Caco-2 (cell line): ENCODE measurements at regions of chr19 and their contacts with region 1.

Region 1: DNA sequence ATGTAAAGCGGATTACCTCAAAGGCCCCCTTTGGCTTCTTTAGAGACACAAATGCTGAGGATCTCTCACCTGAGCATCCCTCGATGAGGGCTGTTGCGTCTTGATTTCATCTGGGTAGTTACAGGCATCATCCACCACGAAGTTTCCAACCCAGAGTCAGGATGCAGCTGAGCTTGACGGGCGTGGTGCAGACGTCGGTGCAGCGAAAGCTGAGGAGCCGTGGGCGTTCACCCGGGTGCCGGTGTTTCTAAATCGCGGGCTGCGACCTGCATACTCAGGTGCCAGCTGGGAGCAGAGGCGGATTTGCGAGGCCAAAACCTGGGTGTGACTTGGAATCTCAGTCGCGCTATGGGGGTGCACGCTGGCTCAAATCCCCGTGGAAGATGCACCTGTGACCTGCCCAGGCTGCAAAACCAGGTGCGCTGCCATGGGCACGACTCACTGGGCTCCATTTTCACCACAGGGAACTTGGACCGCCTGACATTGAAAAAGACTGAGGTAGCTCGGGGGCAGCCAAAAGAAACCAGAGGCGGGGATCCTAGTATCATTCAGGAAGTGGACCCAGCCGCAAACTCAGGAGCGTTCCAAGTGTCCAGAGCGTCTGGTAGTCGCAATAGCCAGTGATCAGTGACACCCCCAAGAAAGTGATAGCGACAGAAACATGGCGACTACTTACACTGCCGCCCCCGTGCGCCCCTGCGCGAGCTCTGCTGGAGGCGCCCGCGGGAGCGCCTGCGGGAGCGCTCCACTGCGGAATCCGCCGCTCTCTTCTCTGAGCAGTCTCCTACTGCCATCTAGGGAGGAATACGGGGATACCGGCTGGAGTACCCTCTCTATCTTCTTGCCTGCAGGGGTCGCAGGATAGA is 36.4 kb upstream of the IGFL4 start:
- DNase-seq: peak; percentile 90 to 92
- H3K4me3 ChIP-seq: peak overlapping the region; percentile 53
- H3K4me3 Mint-ChIP-seq: peak overlapping the region; percentile 86
- H3K27ac Mint-ChIP-seq: peak overlapping the region; percentile 57
- H3K4me1 ChIP-seq: peaks cover 5% of the 10 kb centered on the region; the same call in 1 of the 2 replicates
- H3K4me1 Mint-ChIP-seq: peaks cover 22% of the 10 kb centered on the region
- H3K27me3 ChIP-seq: no peaks in the 10 kb centered on the region
- H3K27me3 Mint-ChIP-seq: no peaks in the 10 kb centered on the region
- CTCF ChIP-seq: peak; percentile 98 to 100

Region 2: GRCh38 chr19:46021531-46022041 is 55.6 kb before region 1 on chr19:
- CTCF ChIA-PET with region 1: interaction called, 156 read pairs
- POLR2A ChIA-PET with region 1: no interaction called
- intact Hi-C with region 1: no loop called
- DNase-seq: peak in 1 of 2 experiments; percentile 26
- H3K4me3 ChIP-seq: no peak overlapping the region
- H3K4me3 Mint-ChIP-seq: no peak overlapping the region
- H3K27ac Mint-ChIP-seq: no peak overlapping the region
- H3K4me1 ChIP-seq: peaks cover under 1% of the 10 kb centered on the region; the same call in 1 of the 2 replicates
- H3K4me1 Mint-ChIP-seq: peaks cover 8% of the 10 kb centered on the region
- H3K27me3 ChIP-seq: no peaks in the 10 kb centered on the region
- H3K27me3 Mint-ChIP-seq: no peaks in the 10 kb centered on the region
- CTCF ChIP-seq: no peak

Region 3: DNA sequence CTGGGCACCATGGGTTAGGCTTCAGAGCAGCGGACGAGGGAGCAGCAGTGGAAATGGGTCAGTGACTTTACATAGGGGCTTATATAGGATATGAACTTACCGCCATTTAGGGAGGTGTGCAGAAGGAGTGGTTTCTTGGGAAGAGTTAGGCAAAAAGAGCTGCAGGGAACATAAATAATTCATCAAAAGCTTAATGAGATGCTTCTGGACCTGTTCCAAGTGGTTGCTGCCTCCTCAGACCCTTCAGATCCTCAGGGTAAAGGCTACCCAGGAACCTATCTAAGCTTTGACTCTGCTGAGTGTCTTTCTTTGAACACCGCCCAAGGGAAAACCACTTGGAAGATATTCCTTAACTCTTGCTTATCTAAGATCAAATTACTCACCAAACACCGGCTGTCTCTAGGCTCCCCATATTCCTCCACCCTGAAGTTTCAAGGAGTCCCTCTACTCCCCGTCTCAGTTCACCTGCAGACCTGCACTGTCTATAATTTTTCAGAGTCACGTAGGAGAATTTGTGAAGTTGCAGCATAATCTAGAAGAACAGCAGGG is 36.2 kb before region 1 on chr19 and contains the start of gene IGFL4:
- CTCF ChIA-PET with region 1: interaction called, 25 read pairs
- POLR2A ChIA-PET with region 1: no interaction called
- intact Hi-C with region 1: no loop called
- DNase-seq: peak; percentile 48 to 80
- H3K4me3 ChIP-seq: no peak within 1 kb of the TSS
- H3K4me3 Mint-ChIP-seq: peak within 1 kb of the TSS; percentile 40
- H3K27ac Mint-ChIP-seq: peak within 1 kb of the TSS; percentile 14
- H3K4me1 ChIP-seq: peaks cover 36% of the 10 kb centered on the region
- H3K4me1 Mint-ChIP-seq: peaks cover 37% of the 10 kb centered on the region
- H3K27me3 ChIP-seq: no peaks in the 10 kb centered on the region
- H3K27me3 Mint-ChIP-seq: no peaks in the 10 kb centered on the region
- CTCF ChIP-seq: no peak
- total RNA-seq, gene IGFL4: 3.9 and 4.4 TPM in 2 replicates

Region 4: GRCh38 chr19:46256855-46257254 is 179.7 kb after region 1 on chr19:
- CTCF ChIA-PET with region 1: interaction called, 12 read pairs
- POLR2A ChIA-PET with region 1: no interaction called
- intact Hi-C with region 1: no loop called
- DNase-seq: no peak
- H3K4me3 ChIP-seq: no peak overlapping the region
- H3K4me3 Mint-ChIP-seq: no peak overlapping the region
- H3K27ac Mint-ChIP-seq: no peak overlapping the region
- H3K4me1 ChIP-seq: no peaks in the 10 kb centered on the region
- H3K4me1 Mint-ChIP-seq: peaks cover 6% of the 10 kb centered on the region
- H3K27me3 ChIP-seq: no peaks in the 10 kb centered on the region
- H3K27me3 Mint-ChIP-seq: no peaks in the 10 kb centered on the region
- CTCF ChIP-seq: no peak